Heart right ventricle (tissue), 16 donors: ENCODE measurements at regions of chr18 and their contacts with region 1.

Region 1: DNA sequence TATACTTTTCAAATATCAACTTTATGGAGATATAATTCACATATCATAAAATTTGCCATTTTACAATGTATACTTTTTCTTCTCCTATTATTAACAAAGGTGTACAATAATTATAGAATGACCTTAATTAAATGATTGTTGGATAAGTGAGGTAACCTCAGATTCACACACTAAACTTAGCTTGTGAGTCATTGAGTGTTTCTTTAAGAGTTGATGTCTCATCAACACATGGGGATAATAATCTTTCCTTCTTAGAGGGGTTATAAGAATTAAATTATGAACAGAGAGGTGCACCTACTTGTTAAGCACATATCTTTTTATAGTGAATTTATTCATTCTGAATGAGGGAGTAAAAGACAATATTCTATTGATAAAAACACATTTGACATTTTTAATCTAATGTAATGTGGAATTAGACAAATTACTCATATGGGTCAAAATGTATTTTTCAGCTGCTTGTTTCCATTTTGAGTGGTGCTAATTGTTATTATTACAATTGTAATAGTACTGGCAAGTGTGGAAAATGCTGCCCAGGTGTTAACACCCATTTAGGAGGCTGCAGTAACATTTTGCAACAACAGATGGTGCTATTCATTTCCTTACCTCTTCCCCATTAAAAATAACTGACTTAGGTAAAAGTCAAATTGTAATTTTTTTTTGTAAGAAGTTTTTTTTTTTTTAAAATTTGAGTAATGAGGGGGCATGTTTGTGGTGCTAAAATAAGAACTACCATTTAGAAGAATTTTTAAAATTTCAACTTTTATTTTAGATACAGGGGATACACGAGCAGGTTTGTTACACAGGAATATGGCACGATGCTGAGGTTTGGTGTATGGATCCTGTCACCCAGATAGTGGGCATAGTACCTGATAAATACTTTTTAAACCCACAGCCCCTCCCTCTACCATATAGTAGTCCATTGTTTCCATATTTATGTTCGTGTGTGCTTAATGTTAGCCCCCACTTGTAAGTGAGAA is 32.1 kb upstream of the DYNAP start:
- DNase-seq: no peak
- ATAC-seq: no peak
- H3K4me3 ChIP-seq: no peak overlapping the region
- H3K27ac ChIP-seq: no peak overlapping the region
- H3K4me1 ChIP-seq: no peaks in the 10 kb centered on the region
- H3K27me3 ChIP-seq: no peaks in the 10 kb centered on the region
- CTCF ChIP-seq: peak; percentile 28 to 72 (median 61)

Region 2: GRCh38 chr18:54608008-54608642 is 49.2 kb after region 1 on chr18:
- intact Hi-C with region 1: loop called in 1 of 10 experiments (anchors 2 kb)
- DNase-seq: no peak
- ATAC-seq: no peak
- H3K4me3 ChIP-seq: peak overlapping the region in 5 of 10 donors; percentile 8 to 28 (median 18)
- H3K27ac ChIP-seq: no peak overlapping the region
- H3K4me1 ChIP-seq: peaks cover 0 to 4% (median 0%) of the 10 kb centered on the region in 9 donors
- H3K27me3 ChIP-seq: no peaks in the 10 kb centered on the region
- CTCF ChIP-seq: no peak

Region 3: DNA sequence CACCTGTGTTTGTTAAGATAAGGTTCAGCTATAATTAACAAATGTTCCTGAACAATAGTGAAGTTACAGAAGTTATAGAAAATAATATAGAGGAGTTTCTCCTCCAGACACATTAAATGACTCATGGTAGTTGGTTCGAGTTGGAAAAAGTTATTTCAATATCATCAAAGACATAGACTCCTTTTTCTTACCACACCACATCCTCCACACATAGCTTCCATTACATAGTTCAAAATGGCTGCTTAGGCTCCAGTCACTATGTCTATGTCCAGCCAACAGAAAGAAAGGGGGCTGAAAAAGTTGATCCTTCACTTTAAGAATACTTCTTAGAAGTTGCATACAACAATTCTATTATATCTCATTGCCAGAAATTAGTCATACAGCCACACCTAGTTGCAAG is 82.8 kb after region 1 on chr18:
- intact Hi-C with region 1: no loop called
- DNase-seq: no peak
- ATAC-seq: no peak
- H3K4me3 ChIP-seq: no peak overlapping the region
- H3K27ac ChIP-seq: no peak overlapping the region
- H3K4me1 ChIP-seq: no peaks in the 10 kb centered on the region
- H3K27me3 ChIP-seq: peaks cover 0 to 12% (median 0%) of the 10 kb centered on the region in 7 donors
- CTCF ChIP-seq: no peak

Region 4: DNA sequence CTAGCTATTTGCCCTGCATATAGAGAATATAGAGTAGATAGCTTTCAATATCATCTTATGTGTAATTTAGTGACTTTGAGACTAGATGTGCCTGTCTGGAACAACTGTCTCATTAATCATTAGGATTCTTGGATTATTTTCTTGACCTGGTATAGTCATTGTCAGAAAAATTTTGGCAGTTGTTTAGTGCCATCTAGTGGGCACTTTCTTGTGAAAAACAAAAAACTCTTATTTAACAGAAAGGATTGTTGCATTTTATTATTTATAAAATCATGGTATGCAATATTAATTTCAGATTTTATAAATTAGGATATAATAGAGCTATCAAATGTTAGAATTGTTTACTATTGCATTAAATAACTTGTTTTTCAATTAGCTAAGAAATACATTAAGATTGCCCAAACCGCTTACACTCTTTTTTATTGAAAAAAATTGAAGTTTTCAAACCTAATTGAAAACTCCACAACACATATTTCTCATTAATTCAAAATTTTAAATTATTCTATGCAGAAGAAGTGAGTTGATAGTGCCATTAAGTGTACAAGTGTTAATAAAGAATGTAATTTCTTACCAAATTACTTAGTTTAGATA is 112.5 kb after region 1 on chr18:
- intact Hi-C with region 1: loop called in 2 of 10 experiments (anchors 5 to 10 kb)
- DNase-seq: no peak
- ATAC-seq: no peak
- H3K4me3 ChIP-seq: no peak overlapping the region
- H3K27ac ChIP-seq: no peak overlapping the region
- H3K4me1 ChIP-seq: no peaks in the 10 kb centered on the region
- H3K27me3 ChIP-seq: no peaks in the 10 kb centered on the region
- CTCF ChIP-seq: peak; percentile 31 to 73 (median 62)

Region 5: DNA sequence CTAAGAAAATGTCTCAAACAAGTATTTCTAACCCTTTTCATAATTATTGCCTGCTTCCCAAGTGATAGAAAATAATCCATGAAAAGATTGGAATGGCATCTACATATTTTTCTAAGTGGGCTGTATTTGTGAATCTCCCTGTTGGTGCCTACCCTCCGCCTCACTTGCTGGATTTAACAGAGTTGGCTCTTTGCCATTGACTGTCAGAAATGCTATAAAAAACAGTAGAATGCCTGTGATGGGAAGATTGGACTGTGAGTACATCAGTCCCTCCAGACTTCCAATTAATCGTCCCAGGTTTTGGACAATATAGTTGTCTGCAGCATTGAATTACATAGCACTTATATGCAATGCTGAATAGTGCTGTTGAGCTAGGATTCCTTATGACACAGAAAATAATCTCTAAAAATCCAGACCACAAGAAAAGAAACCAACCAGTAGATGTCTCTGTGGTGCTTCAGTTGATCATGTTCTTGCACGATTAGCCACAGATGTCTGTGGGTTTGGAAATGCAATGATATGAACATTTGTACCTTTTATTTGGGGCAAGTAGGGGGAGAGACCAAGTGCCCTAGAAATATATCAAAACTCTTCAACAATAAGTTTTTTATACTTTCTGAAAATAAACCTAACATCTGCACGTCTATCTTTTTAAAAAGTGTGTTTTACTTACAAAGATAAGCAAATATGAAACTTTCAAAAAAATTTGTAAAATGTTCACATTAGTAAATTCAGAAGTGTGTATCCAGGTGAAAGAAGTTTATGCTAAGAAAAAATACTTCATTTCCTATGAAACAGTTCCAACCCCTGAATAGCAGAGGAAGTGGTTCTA is 120.6 kb after region 1 on chr18:
- intact Hi-C with region 1: loop called in 2 of 10 experiments (anchors 5 to 10 kb)
- DNase-seq: peak in 1 of 2 donors; percentile 14
- ATAC-seq: peak in 4 of 8 donors; percentile 35 to 61 (median 54)
- H3K4me3 ChIP-seq: no peak overlapping the region
- H3K27ac ChIP-seq: no peak overlapping the region
- H3K4me1 ChIP-seq: peaks cover 0 to 3% (median 0%) of the 10 kb centered on the region in 9 donors
- H3K27me3 ChIP-seq: no peaks in the 10 kb centered on the region
- CTCF ChIP-seq: peak in 8 of 9 donors; percentile 29 to 60 (median 48)

Region 6: DNA sequence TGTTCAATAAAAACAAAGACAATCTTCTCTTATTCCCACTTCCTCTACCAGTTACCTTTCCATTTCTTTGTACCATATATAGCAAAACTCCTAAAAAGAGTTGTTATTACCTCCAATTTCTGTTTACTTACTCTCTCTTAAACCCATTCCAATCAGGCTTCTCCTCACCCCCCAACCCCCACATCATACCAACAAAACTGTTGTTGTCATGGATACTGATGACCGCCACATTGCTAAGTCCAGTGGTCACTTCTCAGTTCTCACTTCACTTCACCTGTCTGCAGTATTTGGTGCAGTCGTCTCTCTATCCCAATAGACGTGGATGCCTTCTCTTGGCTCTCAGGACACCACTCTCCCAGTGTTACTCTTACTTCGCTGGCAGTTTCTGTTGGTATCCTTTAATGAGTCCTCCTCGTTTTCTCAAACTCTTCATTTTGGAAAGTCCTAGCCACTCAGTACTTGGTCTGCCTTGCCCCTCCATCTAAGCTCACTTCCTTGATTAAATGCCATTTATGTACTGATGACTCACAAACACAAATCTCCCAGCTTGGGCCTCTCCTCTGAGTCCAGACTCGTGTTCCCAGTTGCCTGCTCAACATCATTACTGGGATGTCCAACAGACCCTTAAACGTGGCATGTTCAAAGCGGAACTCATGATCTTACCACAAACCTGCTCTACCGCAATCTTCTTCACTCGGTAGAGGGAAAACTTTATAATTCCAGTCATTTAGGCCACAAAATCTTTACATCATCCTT is 414.0 kb after region 1 on chr18:
- intact Hi-C with region 1: loop called in 1 of 10 experiments (anchors 10 kb)
- DNase-seq: no peak
- ATAC-seq: no peak
- H3K4me3 ChIP-seq: no peak overlapping the region
- H3K27ac ChIP-seq: no peak overlapping the region
- H3K4me1 ChIP-seq: no peaks in the 10 kb centered on the region
- H3K27me3 ChIP-seq: no peaks in the 10 kb centered on the region
- CTCF ChIP-seq: no peak

Region 7: DNA sequence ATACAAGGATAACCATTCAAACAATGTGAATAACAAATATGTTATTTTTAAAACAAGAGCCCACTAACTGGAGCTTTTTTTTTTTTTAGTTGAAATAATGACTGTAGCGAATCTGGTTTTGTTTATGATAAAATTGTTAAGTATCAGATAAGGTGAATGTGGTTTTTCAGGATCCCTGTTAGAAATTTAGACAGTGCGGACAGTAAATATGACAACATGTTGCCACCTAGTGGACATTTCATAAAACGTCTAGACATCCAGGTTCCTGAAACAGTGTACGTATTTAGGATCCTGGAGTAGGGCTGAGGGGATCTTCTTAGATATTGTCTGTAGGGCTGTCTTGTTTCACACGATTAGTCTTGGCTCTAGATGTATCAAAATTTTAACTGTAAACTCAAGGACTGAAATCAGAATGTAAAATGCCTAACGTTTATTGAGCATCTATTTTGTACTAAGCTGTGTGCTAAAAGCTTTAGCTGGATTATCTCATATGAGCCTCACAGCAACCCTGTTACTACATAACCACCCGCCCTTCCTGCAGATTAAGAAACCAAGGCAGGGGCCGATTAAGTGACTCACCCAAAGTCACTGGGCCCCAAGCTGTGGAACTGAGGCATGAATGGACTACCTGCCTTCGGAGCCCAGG is 424.3 kb after region 1 on chr18:
- intact Hi-C with region 1: loop called in 8 of 10 experiments (anchors 5 to 10 kb)
- DNase-seq: peak in 1 of 2 donors; percentile 12
- ATAC-seq: peak in 6 of 8 donors; percentile 52 to 70 (median 62)
- H3K4me3 ChIP-seq: no peak overlapping the region
- H3K27ac ChIP-seq: no peak overlapping the region
- H3K4me1 ChIP-seq: no peaks in the 10 kb centered on the region
- H3K27me3 ChIP-seq: no peaks in the 10 kb centered on the region
- CTCF ChIP-seq: peak; percentile 48 to 84 (median 75)